Endothelial cell of umbilical vein (primary cell): ENCODE measurements at regions of chr2 and their contacts with region 1.

Region 1: GRCh38 chr2:187554011-187554703 is at the start of gene TFPI:
- DNase-seq: peak; percentile 93
- H3K4me3 ChIP-seq: peak within 1 kb of the TSS; percentile 82 to 95 (median 87)
- H3K27ac ChIP-seq: peak within 1 kb of the TSS; percentile 87
- H3K4me1 ChIP-seq: peaks cover 36% of the 10 kb centered on the region
- H3K27me3 ChIP-seq: no peaks in the 10 kb centered on the region
- CTCF ChIP-seq: no peak
- POLR2A ChIP-seq: peak; percentile 97
- total RNA-seq, gene TFPI: 266 and 286 TPM in 2 replicates

Region 2: GRCh38 chr2:187442378-187442777 is 111.8 kb before region 1 on chr2:
- CTCF ChIA-PET with region 1: no interaction called
- POLR2A ChIA-PET with region 1: no interaction called
- dilution Hi-C with region 1: no loop called
- intact Hi-C with region 1: loop called (anchors 5 kb)
- DNase-seq: no peak
- H3K4me3 ChIP-seq: peak overlapping the region in 2 of 3 experiments; percentile 60 to 100
- H3K27ac ChIP-seq: peak overlapping the region; percentile 88
- H3K4me1 ChIP-seq: peaks cover 68% of the 10 kb centered on the region
- H3K27me3 ChIP-seq: no peaks in the 10 kb centered on the region
- CTCF ChIP-seq: no peak
- POLR2A ChIP-seq: no peak

Region 3: DNA sequence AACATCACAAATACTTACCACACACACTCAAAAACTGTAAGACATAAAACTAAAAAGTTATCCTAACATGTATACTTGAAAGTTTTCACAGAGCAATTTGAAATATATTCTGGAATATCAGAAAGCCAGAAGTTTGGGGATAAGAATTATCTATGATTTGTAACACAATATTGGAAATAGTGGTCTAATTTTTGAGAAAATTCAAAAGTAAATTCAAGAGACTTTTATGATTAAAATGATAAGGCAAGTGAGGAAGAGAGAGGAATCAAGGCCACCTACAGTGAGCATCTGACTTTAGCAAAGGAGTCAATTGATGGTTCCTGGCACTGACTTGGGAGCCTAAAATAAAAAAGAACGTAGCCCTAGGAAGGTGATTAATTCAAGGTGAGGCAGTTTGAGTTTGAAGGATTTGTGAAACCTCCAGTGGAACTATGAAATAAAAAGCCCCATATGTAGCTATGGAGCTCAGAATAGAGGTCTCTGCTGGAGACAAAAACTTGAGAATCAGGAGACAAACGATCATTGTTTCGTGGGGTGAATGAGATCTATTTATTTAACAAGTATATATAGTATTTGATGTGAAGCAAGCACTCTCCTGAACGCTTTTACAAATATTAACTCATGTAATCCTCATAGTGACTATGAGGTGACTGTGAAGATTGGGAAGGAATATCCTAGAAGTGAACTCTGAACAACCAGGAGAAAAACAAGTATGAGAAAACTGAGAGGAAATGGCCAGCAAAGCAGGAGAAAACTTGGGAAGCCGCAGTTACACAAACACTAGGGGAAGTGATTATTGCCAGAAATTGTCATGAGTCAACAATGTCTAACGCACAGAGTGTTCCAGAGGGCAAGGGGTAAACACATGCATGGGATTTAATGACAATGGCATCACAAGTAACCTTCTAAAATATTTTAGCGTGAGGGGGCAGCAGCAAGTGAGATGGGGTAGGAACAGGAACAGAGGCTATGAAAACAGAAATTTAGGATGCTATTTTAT is 12.8 kb before region 1 on chr2:
- CTCF ChIA-PET with region 1: interaction called, 10 read pairs
- POLR2A ChIA-PET with region 1: interaction called, 7 read pairs
- dilution Hi-C with region 1: no loop called
- intact Hi-C with region 1: loop called (anchors 1 kb)
- DNase-seq: peak; percentile 96
- H3K4me3 ChIP-seq: peak overlapping the region in 1 of 3 experiments; percentile 11
- H3K27ac ChIP-seq: peak overlapping the region; percentile 94
- H3K4me1 ChIP-seq: peaks cover 55% of the 10 kb centered on the region
- H3K27me3 ChIP-seq: no peaks in the 10 kb centered on the region
- CTCF ChIP-seq: no peak
- POLR2A ChIP-seq: peak; percentile 81

Region 4: DNA sequence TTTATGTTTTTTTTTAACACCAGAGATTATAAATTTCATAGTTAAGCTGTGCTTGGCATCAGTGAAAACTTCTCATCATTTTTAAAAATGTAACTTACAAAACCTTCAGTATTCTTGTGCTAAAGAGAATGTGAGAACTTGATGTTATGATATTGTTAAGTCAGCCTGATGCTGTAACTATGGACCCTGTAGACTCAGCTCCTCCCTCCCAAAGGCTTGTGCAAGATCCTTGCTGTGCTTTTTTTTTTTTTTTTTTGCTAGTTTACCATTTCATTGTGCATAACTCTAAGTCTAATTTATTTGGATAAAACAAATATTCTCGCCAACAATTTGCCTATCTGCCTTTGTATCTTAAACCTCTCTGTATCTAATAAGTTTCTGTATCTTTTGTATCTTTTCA is 13.0 kb after region 1 on chr2:
- CTCF ChIA-PET with region 1: interaction called, 26 read pairs
- POLR2A ChIA-PET with region 1: interaction called, 14 read pairs
- dilution Hi-C with region 1: no loop called
- intact Hi-C with region 1: loop called (anchors 1 kb)
- DNase-seq: peak; percentile 40
- H3K4me3 ChIP-seq: no peak overlapping the region
- H3K27ac ChIP-seq: no peak overlapping the region
- H3K4me1 ChIP-seq: peaks cover 30% of the 10 kb centered on the region
- H3K27me3 ChIP-seq: no peaks in the 10 kb centered on the region
- CTCF ChIP-seq: no peak
- POLR2A ChIP-seq: no peak

Region 5: DNA sequence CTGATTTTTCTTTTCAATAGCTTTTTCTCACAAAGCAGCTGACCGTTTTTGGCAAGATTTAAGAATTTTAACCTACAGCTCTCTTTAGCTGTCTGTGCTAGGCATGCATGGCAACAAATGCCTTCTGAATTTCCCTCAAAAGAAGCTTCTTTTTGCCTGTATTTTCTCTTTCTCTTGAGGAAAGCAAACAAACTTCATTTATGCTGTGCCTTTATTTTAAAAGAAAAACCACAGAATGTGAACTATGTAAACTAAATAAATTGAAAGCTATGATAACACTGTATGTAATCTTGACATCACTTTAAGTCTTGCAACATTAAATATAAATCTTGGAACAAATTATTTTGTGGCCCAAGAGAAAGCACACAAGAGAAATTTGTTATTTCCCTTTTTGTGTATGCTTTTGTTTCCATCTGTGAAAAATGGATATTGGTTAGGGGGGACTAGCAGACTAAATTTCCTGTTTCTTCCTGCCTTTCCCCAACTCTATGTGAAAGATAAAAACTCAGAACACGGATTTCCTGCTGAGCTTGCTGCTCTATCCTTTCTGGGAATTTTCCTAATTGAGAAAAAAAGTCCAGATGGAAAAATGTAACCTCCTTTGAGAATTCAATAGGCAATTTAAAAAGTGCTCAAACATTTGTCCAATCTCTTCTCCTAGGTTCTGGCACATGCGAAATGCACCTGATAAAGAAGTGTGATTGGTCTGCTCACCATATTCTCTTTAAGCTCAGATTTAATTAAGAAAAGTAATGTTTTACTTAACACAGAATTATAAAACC is 21.0 kb after region 1 on chr2:
- CTCF ChIA-PET with region 1: interaction called, 45 read pairs
- POLR2A ChIA-PET with region 1: interaction called, 13 read pairs
- dilution Hi-C with region 1: no loop called
- intact Hi-C with region 1: loop called (anchors 1 kb)
- DNase-seq: peak; percentile 90
- H3K4me3 ChIP-seq: peak overlapping the region in 1 of 3 experiments; percentile 19
- H3K27ac ChIP-seq: peak overlapping the region; percentile 57
- H3K4me1 ChIP-seq: peaks cover 27% of the 10 kb centered on the region
- H3K27me3 ChIP-seq: no peaks in the 10 kb centered on the region
- CTCF ChIP-seq: no peak
- POLR2A ChIP-seq: no peak